Cardiac septum (tissue), 1 donor: ENCODE measurements at regions of chr20 and their contacts with region 1.

Region 1: DNA sequence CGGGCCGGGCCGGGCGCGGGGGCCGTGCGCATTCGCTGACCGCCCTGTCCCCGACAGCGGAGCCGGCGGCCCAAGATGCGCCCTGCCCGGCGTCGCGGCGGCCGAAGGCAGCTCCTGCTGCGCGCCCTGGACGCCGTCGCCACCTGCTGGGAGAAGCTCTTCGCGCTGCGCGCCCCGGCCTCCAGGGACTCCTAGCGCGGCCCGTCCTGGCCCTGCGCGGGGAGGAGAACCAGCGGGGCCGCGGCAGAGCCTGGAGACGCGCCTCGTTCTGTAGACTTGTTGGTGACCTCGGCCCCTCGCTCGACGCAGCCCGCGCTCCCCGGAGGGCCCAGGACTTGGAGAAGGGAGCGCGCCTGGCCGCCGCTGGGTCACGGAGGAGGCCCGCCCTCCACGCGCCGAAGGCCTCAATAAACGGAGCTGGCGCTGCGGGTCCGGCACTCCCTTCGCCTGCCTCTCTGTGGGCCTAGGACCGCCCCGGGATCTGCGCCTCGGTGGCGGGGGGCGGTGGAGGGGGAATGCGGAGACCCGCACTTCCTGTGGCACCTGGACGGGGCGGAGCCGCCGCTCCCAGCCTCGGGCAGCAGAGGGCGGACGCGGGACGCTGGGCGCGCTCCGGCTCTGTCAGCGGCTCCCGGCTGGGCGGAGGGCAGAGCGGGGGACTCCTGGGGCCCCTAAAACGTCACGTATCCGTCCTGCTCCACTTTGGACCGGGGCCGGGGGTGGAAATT is 2.7 kb downstream of the C20orf204 start:
- DNase-seq: no peak

Region 2: GRCh38 chr20:64001607-64002011 is 37.1 kb before region 1 on chr20:
- intact Hi-C with region 1: no loop called
- DNase-seq: no peak

Region 3: GRCh38 chr20:64053841-64054661 is 15.3 kb after region 1 on chr20:
- intact Hi-C with region 1: loop called (anchors 2 kb)
- DNase-seq: peak; percentile 88